ENCODE measurements at regions of chr1 and their contacts with region 1.

Region 1: DNA sequence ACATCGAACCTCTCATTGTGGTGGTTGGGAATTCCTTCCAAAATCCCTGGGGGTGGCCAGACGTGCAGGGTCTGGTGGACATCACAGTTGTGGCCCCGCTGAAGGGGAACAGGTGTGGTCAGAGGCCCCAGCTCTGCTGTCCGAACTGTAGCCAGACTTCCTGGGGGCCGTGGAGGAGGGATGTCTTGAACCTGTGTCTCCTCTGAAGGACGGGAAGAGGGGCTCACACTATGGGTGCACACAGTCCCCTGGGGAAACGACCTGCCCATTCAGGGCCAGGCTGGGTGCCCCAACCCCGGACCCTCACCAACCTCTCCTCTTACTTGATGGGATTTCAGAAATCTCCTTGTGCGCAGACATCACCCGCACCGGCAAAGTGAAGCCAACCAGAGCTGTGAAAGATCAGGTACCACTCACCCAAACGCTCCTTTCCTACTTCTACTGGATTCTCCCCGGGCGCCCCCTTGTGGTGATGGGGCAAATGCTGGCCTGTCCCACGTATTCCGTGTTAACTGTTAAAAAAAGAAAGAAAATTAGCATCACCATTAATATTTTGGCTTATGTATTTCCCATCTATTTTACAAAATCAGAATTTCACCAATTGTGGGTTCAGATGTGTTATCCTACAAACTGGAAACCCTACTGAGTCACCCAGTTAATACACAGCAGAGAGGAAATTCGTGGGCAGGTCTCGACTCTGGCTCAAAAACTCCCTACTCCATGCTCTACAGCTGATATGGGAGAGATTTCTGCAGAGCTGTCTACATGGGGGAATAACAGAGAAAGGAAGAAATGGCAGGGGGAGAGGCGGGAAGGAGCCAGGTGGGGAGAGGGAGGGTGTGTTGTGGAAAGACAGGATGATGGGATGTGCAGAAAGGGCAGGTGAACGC is 28.1 kb downstream of the PADI4 start:
- DNase-seq: peak in 8 of 9 donors; percentile 37 to 71 (median 56)
- ATAC-seq: peak; percentile 57
- H3K4me3 ChIP-seq: no peak overlapping the region
- H3K4me3 Mint-ChIP-seq: no peak overlapping the region
- H3K27ac ChIP-seq: no peak overlapping the region
- H3K27ac Mint-ChIP-seq: no peak overlapping the region
- H3K4me1 ChIP-seq: no peaks in the 10 kb centered on the region
- H3K4me1 Mint-ChIP-seq: peaks cover 0 to 5% (median 0%) of the 10 kb centered on the region in 7 donors
- H3K27me3 ChIP-seq: no peaks in the 10 kb centered on the region
- H3K27me3 Mint-ChIP-seq: peaks cover 5 to 33% (median 16%) of the 10 kb centered on the region in 5 donors

Region 2: DNA sequence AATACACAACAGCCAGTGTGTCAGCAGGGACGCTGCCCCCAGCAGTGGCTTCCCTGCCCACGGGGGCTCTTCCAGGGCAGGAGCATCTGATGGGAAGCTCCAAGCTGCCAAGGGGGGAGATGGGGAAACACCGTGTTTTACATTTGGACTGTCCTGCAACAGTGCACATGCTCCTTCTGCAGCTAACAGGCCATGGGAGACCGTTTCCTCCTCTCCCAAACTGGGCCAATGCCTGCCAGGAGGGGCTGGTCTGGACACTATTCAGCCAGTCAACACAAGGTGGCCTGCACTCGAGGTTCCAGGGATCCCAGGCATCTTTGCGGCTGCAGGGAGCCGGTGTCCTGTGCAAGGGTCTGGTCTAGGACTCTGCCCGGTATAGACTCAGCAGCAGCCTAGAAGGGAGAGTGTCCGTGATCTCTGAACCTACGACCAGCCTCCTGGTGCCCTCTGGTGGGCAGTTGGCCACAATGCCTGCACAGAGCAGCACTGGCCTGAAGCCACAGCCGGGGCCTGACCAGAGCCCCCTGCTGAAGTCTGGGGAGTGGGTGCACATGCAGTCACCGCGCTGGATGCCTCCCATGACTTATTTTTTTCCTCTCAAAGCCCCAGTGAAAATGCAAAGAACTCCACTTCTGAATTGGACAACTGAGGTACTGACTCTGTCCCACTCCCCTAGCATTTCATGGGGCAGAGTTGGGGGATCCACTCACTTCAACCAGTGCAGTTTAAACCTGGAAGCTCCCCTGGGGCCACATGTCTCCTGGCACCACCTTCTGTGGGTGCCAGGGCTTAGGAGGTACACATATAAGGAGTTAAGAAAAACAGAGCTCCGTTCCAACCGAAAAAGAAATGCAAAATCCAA is 70.1 kb after region 1 on chr1:
- CTCF ChIA-PET with region 1: interaction called, 3 read pairs
- POLR2A ChIA-PET with region 1: no interaction called
- intact Hi-C with region 1: loop called in 1 of 2 experiments (anchors 1 kb)
- DNase-seq: peak in 8 of 9 donors; percentile 4 to 36 (median 31)
- ATAC-seq: peak; percentile 88
- H3K4me3 ChIP-seq: no peak overlapping the region
- H3K4me3 Mint-ChIP-seq: no peak overlapping the region
- H3K27ac ChIP-seq: no peak overlapping the region
- H3K27ac Mint-ChIP-seq: no peak overlapping the region
- H3K4me1 ChIP-seq: no peaks in the 10 kb centered on the region
- H3K4me1 Mint-ChIP-seq: peaks cover 0 to 4% (median 0%) of the 10 kb centered on the region in 7 donors
- H3K27me3 ChIP-seq: no peaks in the 10 kb centered on the region
- H3K27me3 Mint-ChIP-seq: no peaks in the 10 kb centered on the region

Measured in naive thymus-derived CD4-positive, alpha-beta T cell (primary cell).